ENCODE measurements at regions of chr6 and their contacts with region 1.

Region 1: DNA sequence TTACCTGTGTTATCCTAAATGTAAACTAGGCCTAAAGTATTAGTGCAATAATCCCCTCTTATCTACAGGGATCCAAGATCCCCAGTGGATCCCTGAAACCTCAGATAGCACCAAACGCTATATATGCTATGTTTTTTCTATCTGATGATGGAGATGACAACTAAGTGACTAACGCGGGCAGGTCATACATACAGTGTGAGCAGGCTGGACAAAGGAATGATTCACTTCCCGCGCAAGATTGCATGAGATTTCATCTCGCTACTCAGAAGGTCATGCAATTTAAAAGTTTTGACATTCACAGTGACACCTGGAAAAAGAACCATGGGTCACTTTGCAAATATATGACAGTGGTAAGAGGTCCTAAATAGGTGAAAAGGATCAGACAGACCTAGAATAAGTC is 875.9 kb downstream of the HACE1 start:
- DNase-seq: no peak
- H3K4me3 ChIP-seq: no peak overlapping the region
- H3K27ac ChIP-seq: no peak overlapping the region
- H3K4me1 ChIP-seq: peaks cover 20% of the 10 kb centered on the region
- H3K27me3 ChIP-seq: no peaks in the 10 kb centered on the region
- CTCF ChIP-seq: no peak

Region 2: GRCh38 chr6:103872678-103873077 is 111.2 kb before region 1 on chr6:
- CTCF ChIA-PET with region 1: no interaction called
- POLR2A ChIA-PET with region 1: no interaction called
- intact Hi-C with region 1: loop called (anchors 5 kb)
- DNase-seq: peak; percentile 45
- H3K4me3 ChIP-seq: no peak overlapping the region
- H3K27ac ChIP-seq: no peak overlapping the region
- H3K4me1 ChIP-seq: peaks cover 39% of the 10 kb centered on the region
- H3K27me3 ChIP-seq: no peaks in the 10 kb centered on the region
- CTCF ChIP-seq: no peak

Measured in A673 (cell line).